PC-3 (cell line): ENCODE measurements at regions of chr5 and their contacts with region 1.

Region 1: GRCh38 chr5:150022163-150022540 is 21.6 kb downstream of the HMGXB3 start:
- DNase-seq: peak; percentile 90
- ATAC-seq: peak; percentile 48
- H3K4me3 ChIP-seq: peak overlapping the region; percentile 27; the same call in 1 of the 2 replicates
- H3K27ac ChIP-seq: peak overlapping the region; percentile 79
- H3K4me1 ChIP-seq: peaks cover 47% of the 10 kb centered on the region
- H3K27me3 ChIP-seq: no peaks in the 10 kb centered on the region
- CTCF ChIP-seq: no peak

Region 2: DNA sequence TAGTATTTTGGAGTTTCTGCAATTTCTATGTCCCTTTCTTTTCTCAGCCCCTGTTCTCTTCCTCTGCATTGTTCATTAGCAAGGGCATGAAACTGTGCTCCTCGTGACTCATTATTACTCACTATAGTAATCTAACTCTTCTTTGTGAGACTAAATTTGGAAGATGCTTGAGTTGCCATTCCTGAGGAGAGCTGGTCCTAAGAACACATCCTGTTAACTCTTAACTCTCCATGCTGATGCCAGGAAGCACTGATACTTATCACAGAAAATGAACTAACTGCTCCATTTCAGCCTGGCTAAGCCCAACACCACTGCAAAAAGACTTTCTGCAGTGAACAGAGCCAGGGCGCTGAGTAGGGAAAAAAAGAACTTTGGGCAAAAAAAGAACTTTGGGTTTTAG is 460.3 kb before region 1 on chr5:
- CTCF ChIA-PET with region 1: no interaction called
- POLR2A ChIA-PET with region 1: no interaction called
- intact Hi-C with region 1: no loop called
- DNase-seq: peak; percentile 99
- ATAC-seq: peak; percentile 90
- H3K4me3 ChIP-seq: peak overlapping the region; percentile 61
- H3K27ac ChIP-seq: peak overlapping the region; percentile 92
- H3K4me1 ChIP-seq: peaks cover 41% of the 10 kb centered on the region
- H3K27me3 ChIP-seq: no peaks in the 10 kb centered on the region
- CTCF ChIP-seq: no peak

Region 3: GRCh38 chr5:149938791-149939358 is 83.3 kb before region 1 on chr5:
- CTCF ChIA-PET with region 1: no interaction called
- POLR2A ChIA-PET with region 1: no interaction called
- intact Hi-C with region 1: loop called (anchors 2 kb)
- DNase-seq: peak; percentile 100
- ATAC-seq: peak; percentile 83
- H3K4me3 ChIP-seq: peak overlapping the region; percentile 55
- H3K27ac ChIP-seq: peak overlapping the region; percentile 91
- H3K4me1 ChIP-seq: peaks cover 60% of the 10 kb centered on the region
- H3K27me3 ChIP-seq: no peaks in the 10 kb centered on the region
- CTCF ChIP-seq: no peak

Region 4: DNA sequence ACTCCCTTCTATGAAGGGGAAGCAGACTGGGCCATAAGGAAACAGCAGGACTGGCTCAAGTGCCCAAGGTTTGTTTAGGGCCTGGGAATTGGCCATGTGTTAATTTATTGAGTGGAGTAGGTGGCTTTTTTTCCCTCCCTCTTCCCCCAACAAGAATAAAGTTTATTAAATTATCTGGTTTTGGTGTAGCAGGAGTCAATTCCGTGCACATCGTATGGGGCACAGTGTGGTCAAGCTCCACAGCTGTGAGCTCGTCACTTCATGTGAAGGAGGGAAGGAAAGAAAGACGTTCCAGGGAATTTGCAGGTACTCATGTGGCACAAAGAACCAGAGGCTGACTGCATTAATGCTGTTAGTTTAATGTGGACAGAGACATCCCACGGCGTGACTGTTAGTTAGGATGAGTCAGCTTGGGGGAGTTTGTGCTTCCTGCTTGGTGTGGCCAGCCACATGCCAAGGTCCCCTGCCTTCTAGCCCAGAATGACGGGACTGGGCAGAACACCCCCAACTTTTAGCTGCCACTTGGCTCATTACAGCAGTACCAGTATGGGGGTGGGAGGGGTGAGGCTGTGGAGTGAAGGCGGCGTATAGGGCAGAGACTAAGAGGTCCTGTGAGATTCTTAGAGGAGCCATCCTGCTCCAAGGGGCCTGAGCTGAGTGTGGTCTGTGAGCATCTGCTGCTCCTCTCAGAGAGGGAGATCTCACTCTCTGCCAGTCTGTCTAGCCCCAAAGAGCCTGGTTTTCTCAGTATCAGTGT is 31.0 kb after region 1 on chr5:
- CTCF ChIA-PET with region 1: interaction called, 3 read pairs
- POLR2A ChIA-PET with region 1: interaction called, 4 read pairs
- intact Hi-C with region 1: loop called (anchors 1 kb)
- DNase-seq: peak; percentile 90
- ATAC-seq: peak; percentile 80
- H3K4me3 ChIP-seq: no peak overlapping the region
- H3K27ac ChIP-seq: peak overlapping the region; percentile 68
- H3K4me1 ChIP-seq: peaks cover 37% of the 10 kb centered on the region
- H3K27me3 ChIP-seq: no peaks in the 10 kb centered on the region
- CTCF ChIP-seq: no peak

Region 5: DNA sequence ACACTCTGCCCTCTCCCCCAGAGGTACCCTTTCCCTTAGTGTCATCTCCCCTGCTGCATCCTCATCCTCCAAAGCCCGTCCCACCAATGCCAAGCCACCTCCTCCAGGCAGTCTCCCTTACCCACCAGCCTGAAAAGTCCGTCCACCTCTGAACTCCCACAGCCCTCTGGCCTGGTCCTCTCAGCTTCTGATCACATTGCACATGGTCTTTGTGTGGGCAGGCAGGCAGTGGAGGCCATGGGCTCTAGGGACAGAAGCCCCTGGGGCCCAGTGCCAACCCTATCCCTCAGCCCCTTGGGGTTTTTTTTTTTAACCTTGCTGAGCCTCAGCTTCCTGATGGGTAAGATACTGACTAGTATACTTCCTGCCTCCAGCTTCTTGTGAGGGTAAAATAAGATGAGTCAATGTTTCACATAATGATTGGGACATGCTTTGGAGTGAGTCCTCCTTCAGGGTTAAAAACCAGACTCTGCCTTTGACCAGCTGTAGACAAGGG is 44.8 kb after region 1 on chr5:
- CTCF ChIA-PET with region 1: no interaction called
- POLR2A ChIA-PET with region 1: no interaction called
- intact Hi-C with region 1: no loop called
- DNase-seq: peak; percentile 52
- ATAC-seq: peak; percentile 37
- H3K4me3 ChIP-seq: no peak overlapping the region
- H3K27ac ChIP-seq: no peak overlapping the region
- H3K4me1 ChIP-seq: peaks cover 14% of the 10 kb centered on the region
- H3K27me3 ChIP-seq: no peaks in the 10 kb centered on the region
- CTCF ChIP-seq: no peak

Region 6: DNA sequence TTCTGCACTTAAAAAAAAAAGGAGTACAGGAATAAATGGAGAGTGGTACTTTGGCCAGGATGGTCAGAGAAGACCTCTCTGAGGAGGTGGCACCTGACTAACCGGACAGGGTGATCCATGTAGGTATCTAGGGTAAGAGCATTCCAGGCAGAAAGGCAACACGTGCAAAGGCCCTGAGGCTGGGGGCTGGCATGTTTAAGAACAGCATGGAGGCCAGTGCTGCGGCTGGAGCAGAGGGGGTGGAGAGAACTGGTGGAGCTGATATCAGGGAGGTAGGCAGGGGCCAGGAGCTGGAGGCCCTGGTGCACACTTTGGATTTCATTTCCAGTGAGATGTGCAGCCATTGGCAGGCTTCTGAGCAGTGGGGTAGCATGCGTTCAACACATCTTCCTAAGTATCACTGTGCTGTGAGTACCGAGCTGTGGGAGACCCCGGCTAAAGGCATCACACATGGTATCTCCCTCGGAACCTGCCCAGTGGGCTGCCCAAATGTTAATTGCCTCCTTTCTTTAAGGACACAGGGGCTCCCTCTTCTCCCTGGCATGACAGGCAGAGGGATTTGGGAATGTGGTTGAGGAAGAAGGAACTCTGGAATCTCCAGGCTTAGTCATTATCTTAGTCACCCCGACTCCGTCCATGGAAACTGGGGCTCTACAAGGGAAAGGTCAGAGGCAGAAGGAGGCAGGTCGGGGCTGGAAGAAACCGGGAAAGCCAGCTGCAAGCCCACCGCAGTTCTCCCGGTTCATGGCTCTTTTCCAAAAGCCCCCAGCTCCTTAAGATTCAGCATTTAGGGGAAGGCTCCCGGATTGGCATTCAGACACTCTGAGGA is 186.2 kb after region 1 on chr5:
- CTCF ChIA-PET with region 1: no interaction called
- POLR2A ChIA-PET with region 1: no interaction called
- intact Hi-C with region 1: no loop called
- DNase-seq: peak; percentile 71
- ATAC-seq: peak; percentile 57
- H3K4me3 ChIP-seq: peak overlapping the region; percentile 25; the same call in 1 of the 2 replicates
- H3K27ac ChIP-seq: peak overlapping the region; percentile 52
- H3K4me1 ChIP-seq: peaks cover 16% of the 10 kb centered on the region
- H3K27me3 ChIP-seq: no peaks in the 10 kb centered on the region
- CTCF ChIP-seq: no peak